ENCODE measurements at regions of chr12 and their contacts with region 1.

Region 1: DNA sequence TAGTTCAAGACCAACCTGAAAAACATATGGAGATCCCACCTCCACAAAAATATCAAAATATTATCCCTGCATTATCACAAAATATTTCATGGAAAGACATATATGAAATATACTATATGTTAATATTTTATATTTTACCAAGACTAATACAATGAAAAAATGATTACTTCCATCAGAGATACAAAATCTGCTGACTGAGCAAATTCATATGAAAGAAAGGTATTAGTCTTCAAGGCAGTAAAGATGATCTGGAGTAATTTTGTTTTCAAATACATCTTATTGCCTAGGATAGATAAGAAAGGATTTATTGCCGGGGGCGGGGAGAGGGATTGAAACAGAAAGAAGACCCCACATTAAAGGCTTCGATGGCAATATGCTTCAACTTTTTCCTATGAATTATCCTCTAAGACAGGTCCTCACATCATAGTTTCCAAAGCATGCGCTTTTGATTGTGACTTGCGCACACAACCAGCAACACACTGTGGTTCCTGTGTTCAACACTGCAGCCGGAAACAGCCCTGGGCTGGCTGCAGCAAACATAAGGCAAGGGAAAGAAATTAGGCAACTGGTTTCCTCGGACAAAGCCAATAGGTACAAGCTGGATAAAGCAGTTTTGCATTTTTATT is 83.2 kb downstream of the SPPL3 start:
- DNase-seq: peak; percentile 49
- H3K4me3 Mint-ChIP-seq: peak overlapping the region; percentile 23
- H3K27ac Mint-ChIP-seq: peak overlapping the region; percentile 22
- H3K4me1 Mint-ChIP-seq: peaks cover 44% of the 10 kb centered on the region
- H3K27me3 Mint-ChIP-seq: no peaks in the 10 kb centered on the region

Region 2: DNA sequence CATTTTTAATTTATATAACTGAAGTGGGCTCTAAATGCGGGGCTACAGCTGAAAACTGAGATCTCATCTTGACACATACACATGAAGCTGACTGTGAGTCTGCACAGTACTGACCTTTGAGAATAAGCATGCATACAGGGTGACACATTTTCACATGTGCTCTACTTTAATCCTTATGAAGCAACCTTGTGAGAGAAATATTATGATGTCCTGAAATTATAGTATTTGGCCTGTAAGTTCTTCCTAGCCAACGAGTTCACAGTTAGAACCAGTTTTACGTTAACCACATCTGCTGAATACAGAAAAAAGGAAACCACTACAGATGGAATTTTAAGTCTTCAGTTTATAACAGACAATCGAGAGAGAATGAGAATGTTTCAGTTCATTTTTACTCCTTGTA is 12.9 kb after region 1 on chr12:
- CTCF ChIA-PET with region 1: no interaction called
- intact Hi-C with region 1: loop called (anchors 2 kb)
- DNase-seq: no peak
- H3K4me3 Mint-ChIP-seq: no peak overlapping the region
- H3K27ac Mint-ChIP-seq: no peak overlapping the region
- H3K4me1 Mint-ChIP-seq: peaks cover 70% of the 10 kb centered on the region
- H3K27me3 Mint-ChIP-seq: no peaks in the 10 kb centered on the region

Region 3: GRCh38 chr12:121300083-121300819 is 479.3 kb after region 1 on chr12:
- CTCF ChIA-PET with region 1: no interaction called
- intact Hi-C with region 1: no loop called
- DNase-seq: no peak
- H3K4me3 Mint-ChIP-seq: no peak overlapping the region
- H3K27ac Mint-ChIP-seq: no peak overlapping the region
- H3K4me1 Mint-ChIP-seq: peaks cover 12% of the 10 kb centered on the region
- H3K27me3 Mint-ChIP-seq: no peaks in the 10 kb centered on the region

Measured in activated naive CD4-positive, alpha-beta T cell treated with anti-CD3 and anti-CD28 coated beads for 36 hours (primary cell).